Heart left ventricle (tissue), 16 donors: ENCODE measurements at regions of chr7 and their contacts with region 1.

Region 1: GRCh38 chr7:142853739-142854371 is 1.0 kb upstream of the EPHB6 start:
- DNase-seq: peak; percentile 41 to 80 (median 63)
- ATAC-seq: peak; percentile 57 to 81 (median 76)
- H3K4me3 ChIP-seq: peak overlapping the region; percentile 39 to 86 (median 68)
- H3K27ac ChIP-seq: peak overlapping the region in 9 of 12 donors; percentile 12 to 69 (median 61)
- H3K4me1 ChIP-seq: peaks cover 0 to 28% (median 9%) of the 10 kb centered on the region in 12 donors
- H3K27me3 ChIP-seq: peaks cover 0 to 16% (median 0%) of the 10 kb centered on the region in 9 donors
- CTCF ChIP-seq: peak; percentile 50 to 88 (median 72)
- POLR2A ChIP-seq: no peak

Region 2: GRCh38 chr7:142866361-142867058 is 12.7 kb after region 1 on chr7:
- intact Hi-C with region 1: loop called in 1 of 10 experiments (anchors 1 kb)
- DNase-seq: peak in 1 of 5 donors; percentile 57
- ATAC-seq: peak in 3 of 4 donors; percentile 62 to 75 (median 63)
- H3K4me3 ChIP-seq: no peak overlapping the region
- H3K27ac ChIP-seq: no peak overlapping the region
- H3K4me1 ChIP-seq: no peaks in the 10 kb centered on the region
- H3K27me3 ChIP-seq: peaks cover 0 to 4% (median 0%) of the 10 kb centered on the region in 9 donors
- CTCF ChIP-seq: peak; percentile 32 to 61 (median 45)
- POLR2A ChIP-seq: no peak

Region 3: DNA sequence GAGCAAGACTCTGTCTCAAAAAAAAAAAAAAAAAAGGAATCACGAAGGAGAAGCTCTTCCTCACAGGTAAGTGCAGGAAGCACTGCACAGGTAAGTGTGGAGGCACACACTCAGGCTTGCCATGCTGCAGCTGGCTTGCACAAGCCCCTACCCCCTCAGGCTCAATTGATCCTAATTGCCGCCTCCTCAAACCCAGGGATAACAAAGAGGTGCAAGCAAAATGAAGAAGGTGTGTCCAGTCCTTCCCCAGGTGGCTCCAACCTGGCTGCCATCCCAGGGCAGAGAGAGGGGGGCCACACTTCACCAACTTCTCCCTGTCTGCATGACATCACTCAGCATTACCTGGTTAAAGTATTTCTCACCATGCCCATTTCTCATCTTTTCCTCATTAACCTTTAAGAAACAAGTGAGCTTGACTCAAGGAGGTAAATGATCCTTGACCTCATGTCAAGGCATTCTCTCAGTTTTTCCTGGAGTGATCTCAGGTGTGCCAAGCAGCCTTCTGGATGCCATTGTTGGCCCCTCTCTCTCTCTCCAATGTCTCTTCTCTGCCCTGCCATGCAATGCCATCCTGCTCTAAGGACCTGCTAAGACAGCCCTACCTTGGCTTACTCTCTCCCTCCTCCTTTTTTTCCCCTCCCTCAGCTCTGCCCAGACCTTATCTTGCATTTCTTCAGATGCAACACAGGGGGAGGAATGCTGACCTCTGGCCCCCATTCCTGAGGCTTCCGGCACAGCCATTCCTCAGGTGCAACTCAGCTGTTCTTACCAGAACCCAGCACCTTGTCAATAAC is 44.7 kb after region 1 on chr7:
- intact Hi-C with region 1: no loop called
- DNase-seq: no peak
- ATAC-seq: no peak
- H3K4me3 ChIP-seq: no peak overlapping the region
- H3K27ac ChIP-seq: no peak overlapping the region
- H3K4me1 ChIP-seq: no peaks in the 10 kb centered on the region
- H3K27me3 ChIP-seq: peaks cover 0 to 27% (median 0%) of the 10 kb centered on the region in 9 donors
- CTCF ChIP-seq: no peak
- POLR2A ChIP-seq: no peak

Region 4: GRCh38 chr7:143008007-143008901 is 154.4 kb after region 1 on chr7:
- intact Hi-C with region 1: loop called (anchors 1 to 5 kb)
- DNase-seq: peak; percentile 62 to 88 (median 80)
- ATAC-seq: peak; percentile 71 to 93 (median 89)
- H3K4me3 ChIP-seq: no peak overlapping the region
- H3K27ac ChIP-seq: no peak overlapping the region
- H3K4me1 ChIP-seq: peaks cover 0 to 3% (median 0%) of the 10 kb centered on the region in 12 donors
- H3K27me3 ChIP-seq: peaks cover 0 to 7% (median 0%) of the 10 kb centered on the region in 9 donors
- CTCF ChIP-seq: peak; percentile 92 to 98 (median 96)
- POLR2A ChIP-seq: no peak